ENCODE measurements at regions of chr13 and their contacts with region 1.

Region 1: GRCh38 chr13:75675421-75675820 is 39.3 kb downstream of the LMO7 start:
- DNase-seq: no peak
- H3K4me3 ChIP-seq: no peak overlapping the region
- H3K27ac ChIP-seq: no peak overlapping the region
- H3K4me1 ChIP-seq: no peaks in the 10 kb centered on the region
- H3K27me3 ChIP-seq: no peaks in the 10 kb centered on the region

Region 2: DNA sequence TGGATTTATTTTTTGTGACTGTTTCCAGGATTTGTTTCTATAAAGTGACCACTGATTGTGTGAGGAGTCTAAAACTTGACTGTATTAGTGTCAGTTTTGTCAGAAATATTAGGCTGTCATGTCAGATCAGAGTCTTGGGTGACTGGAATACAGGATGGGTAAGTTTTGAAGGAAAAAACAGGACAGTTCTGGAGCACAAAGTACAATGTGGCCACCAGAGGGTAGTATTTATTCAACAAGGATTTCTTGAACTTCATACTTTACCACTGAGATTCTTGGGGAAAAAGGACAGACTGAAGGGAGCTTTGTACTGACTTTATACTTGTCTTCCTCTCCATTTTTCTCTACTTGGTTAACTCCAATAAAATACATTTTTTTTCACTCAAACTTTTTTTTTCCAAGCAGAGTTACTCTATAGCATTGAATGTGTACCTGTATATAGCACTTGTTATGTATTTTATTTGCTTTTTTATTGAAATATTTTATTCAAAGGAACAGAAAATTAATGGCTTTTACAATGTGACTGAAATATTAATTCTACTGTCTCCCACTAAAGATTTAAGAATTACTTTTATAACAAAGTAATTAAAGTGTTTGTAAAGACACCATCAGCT is 11.8 kb after region 1 on chr13:
- CTCF ChIA-PET with region 1: interaction called, 18 read pairs
- POLR2A ChIA-PET with region 1: no interaction called
- DNase-seq: peak; percentile 8 to 19 (median 11)
- H3K4me3 ChIP-seq: no peak overlapping the region
- H3K27ac ChIP-seq: no peak overlapping the region
- H3K4me1 ChIP-seq: no peaks in the 10 kb centered on the region
- H3K27me3 ChIP-seq: no peaks in the 10 kb centered on the region

Region 3: GRCh38 chr13:75771818-75772217 is 96.4 kb after region 1 on chr13:
- CTCF ChIA-PET with region 1: no interaction called
- POLR2A ChIA-PET with region 1: no interaction called
- DNase-seq: no peak
- H3K4me3 ChIP-seq: no peak overlapping the region
- H3K27ac ChIP-seq: no peak overlapping the region
- H3K4me1 ChIP-seq: no peaks in the 10 kb centered on the region
- H3K27me3 ChIP-seq: no peaks in the 10 kb centered on the region

Region 4: GRCh38 chr13:75870397-75870903 is 195.0 kb after region 1 on chr13:
- CTCF ChIA-PET with region 1: interaction called, 20 read pairs
- POLR2A ChIA-PET with region 1: no interaction called
- DNase-seq: peak; percentile 24 to 52 (median 47)
- H3K4me3 ChIP-seq: peak overlapping the region in 5 of 7 experiments; percentile 9 to 69 (median 44)
- H3K27ac ChIP-seq: no peak overlapping the region
- H3K4me1 ChIP-seq: peaks cover 0 to 8% (median 2%) of the 10 kb centered on the region in 4 experiments
- H3K27me3 ChIP-seq: no peaks in the 10 kb centered on the region

Measured in common myeloid progenitor, CD34-positive (primary cell).